ENCODE measurements at regions of chr1 and their contacts with region 1.

Region 1: DNA sequence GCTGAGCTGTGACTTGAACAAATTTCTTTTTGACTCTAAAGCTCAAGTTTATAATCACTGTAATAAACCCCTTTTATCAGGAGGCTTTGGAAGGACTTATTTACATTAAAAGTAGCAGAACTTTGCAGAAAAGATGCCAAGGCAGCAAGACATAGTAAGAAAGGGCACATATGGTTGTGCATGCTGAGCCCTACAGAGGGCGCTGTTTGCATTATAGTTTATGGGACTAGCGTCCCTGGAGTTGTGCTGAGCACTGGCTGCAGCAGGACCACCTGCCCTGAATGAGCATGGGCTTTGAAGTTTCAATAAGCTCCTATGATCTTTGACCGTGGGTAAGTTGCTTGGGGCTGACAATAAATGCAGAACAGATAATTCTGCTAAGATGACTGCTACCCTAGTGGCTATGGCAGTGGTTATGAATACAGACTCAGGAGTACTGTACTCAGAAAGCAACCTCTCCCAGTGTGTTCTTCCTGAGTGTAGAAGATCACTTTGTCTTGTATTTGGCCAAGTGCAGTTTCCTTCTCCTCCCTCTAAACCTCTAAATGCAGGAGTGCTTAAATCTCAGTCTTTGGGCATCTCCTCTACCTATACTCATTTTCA is 45.4 kb upstream of the USP1 start:
- DNase-seq: peak; percentile 21
- H3K4me3 ChIP-seq: no peak overlapping the region; a peak in 1 of 4 replicates
- H3K27ac ChIP-seq: no peak overlapping the region
- H3K4me1 ChIP-seq: peaks cover 0 to 2% of the 10 kb centered on the region in 2 experiments; a peak in 1 of 4 replicates
- H3K27me3 ChIP-seq: no peaks in the 10 kb centered on the region; the same call in 1 of the 2 replicates
- CTCF ChIP-seq: peak; percentile 58
- EP300 ChIP-seq: no peak
- RAD21 ChIP-seq: peak; percentile 36

Region 2: DNA sequence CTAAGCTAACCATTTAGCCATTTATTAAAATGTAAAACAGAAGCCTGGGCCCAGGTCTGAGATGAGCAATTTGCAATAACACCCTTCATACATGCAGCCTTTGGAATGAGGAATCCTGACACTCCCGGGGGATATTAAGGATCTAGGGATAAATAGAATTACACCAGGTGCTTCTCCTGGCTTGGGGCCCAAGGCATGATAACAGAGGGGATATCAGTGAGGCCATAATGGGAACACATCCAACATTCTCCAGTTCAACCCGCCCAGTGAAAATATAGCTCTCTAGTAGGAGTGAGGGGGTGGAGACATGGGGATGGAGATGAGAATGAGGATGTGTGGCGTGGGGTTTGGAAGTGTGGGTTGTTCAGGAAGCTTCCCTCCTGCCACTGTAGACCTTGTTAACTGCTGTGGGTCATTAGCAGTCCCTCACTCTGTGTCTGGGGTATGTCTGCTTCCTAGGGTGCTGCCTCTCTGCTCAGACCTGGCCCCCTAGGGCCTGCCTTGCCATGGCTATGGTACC is 14.4 kb before region 1 on chr1:
- CTCF ChIA-PET with region 1: interaction called, 10 read pairs
- POLR2A ChIA-PET with region 1: no interaction called
- DNase-seq: no peak
- H3K4me3 ChIP-seq: no peak overlapping the region
- H3K27ac ChIP-seq: no peak overlapping the region
- H3K4me1 ChIP-seq: peaks cover 0 to 3% of the 10 kb centered on the region in 2 experiments; a peak in 1 of 4 replicates
- H3K27me3 ChIP-seq: no peaks in the 10 kb centered on the region
- CTCF ChIP-seq: no peak
- EP300 ChIP-seq: no peak
- RAD21 ChIP-seq: no peak

Region 3: GRCh38 chr1:62417361-62417999 is 26.0 kb after region 1 on chr1:
- CTCF ChIA-PET with region 1: no interaction called
- POLR2A ChIA-PET with region 1: no interaction called
- DNase-seq: no peak
- H3K4me3 ChIP-seq: no peak overlapping the region
- H3K27ac ChIP-seq: no peak overlapping the region
- H3K4me1 ChIP-seq: no peaks in the 10 kb centered on the region
- H3K27me3 ChIP-seq: no peaks in the 10 kb centered on the region; the same call in 1 of the 2 replicates
- CTCF ChIP-seq: no peak
- EP300 ChIP-seq: no peak
- RAD21 ChIP-seq: no peak

Measured in SK-N-SH (cell line).